T-cell (primary cell): ENCODE measurements at regions of chr11 and their contacts with region 1.

Region 1: DNA sequence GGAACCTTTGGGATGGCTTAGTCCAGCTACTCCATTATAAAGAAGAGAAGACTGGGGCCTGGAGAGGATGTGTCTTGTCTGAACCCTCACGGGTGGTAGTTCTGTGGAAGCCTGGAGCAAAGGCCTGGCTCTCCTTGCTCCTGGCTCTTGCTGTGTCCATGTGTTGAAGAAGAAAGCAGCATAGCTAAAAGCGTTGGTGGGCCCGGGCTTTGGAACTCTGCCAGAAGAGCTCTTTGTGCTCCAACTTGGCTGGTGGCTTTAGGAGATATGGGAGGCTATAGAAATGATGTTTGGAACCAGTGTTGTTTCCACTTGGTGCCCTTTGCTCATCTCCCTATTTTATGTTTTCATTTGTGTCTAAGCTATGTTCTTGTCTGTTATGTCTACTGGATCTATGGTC is 131.1 kb downstream of the DBX1 start:
- DNase-seq: no peak
- ATAC-seq: no peak
- H3K4me3 ChIP-seq: no peak overlapping the region
- H3K4me3 Mint-ChIP-seq: no peak overlapping the region
- H3K27ac ChIP-seq: no peak overlapping the region
- H3K27ac Mint-ChIP-seq: no peak overlapping the region
- H3K4me1 ChIP-seq: no peaks in the 10 kb centered on the region
- H3K4me1 Mint-ChIP-seq: no peaks in the 10 kb centered on the region
- H3K27me3 ChIP-seq: peaks cover 0 to under 1% of the 10 kb centered on the region in 2 experiments
- H3K27me3 Mint-ChIP-seq: peaks cover 0 to 7% of the 10 kb centered on the region in 2 donors

Region 2: DNA sequence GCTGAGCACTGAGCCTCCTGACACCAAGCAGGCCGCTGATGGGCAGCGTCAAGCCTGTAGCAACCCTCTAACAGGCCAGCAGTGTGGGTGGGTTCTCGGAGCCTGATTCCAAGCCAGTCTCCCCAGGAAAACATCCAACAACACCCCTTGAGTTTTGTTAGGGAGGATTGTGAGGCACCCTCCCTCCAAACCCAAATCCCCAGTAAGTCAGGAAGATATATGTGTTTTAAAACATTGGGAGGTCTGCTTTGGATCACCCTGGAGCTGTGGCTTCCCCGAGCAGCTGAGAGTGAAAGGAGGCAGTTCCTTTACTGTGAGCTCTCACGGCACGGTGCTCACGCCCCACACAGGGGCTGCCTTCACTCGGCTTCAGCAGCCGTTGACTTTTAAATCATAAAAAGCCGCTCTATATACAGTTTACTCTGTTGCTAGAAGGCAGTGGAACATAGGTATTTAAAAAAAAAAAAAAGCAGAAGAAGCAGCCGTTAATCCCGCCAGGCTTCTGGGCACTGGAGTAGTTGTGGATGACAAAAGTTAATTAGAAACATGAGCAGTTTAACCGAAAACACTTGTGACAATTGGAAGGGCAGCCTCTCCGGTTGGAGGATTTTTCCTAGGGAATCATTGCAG is 97.9 kb before region 1 on chr11:
- CTCF ChIA-PET with region 1: no interaction called
- POLR2A ChIA-PET with region 1: no interaction called
- DNase-seq: no peak
- ATAC-seq: no peak
- H3K4me3 ChIP-seq: no peak overlapping the region
- H3K4me3 Mint-ChIP-seq: no peak overlapping the region
- H3K27ac ChIP-seq: no peak overlapping the region
- H3K27ac Mint-ChIP-seq: no peak overlapping the region
- H3K4me1 ChIP-seq: no peaks in the 10 kb centered on the region
- H3K4me1 Mint-ChIP-seq: no peaks in the 10 kb centered on the region
- H3K27me3 ChIP-seq: peaks cover 0 to 8% of the 10 kb centered on the region in 2 experiments
- H3K27me3 Mint-ChIP-seq: peaks cover 4% of the 10 kb centered on the region in 2 donors

Region 3: DNA sequence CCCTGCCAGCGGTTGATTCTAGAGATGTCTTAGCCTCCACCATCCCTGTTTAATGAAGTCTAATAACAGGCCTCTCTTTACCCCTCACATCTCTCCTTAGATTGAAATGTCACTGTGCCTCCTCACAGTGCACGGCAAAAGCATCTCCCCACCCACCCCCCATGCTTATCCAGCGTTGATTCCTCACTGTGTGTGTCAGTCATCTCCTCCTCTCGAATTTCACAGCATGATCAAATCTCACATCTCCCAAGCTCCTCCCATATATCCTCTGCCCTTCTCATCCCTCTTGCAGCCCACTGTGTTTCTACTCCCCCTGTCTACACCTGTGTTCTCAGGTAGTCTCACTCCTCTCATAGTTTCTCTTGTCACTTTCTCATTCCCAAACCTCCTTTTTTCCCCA is 46.4 kb after region 1 on chr11:
- CTCF ChIA-PET with region 1: no interaction called
- POLR2A ChIA-PET with region 1: interaction called in 1 of 2 experiments, 11 read pairs
- DNase-seq: no peak
- ATAC-seq: no peak
- H3K4me3 ChIP-seq: no peak overlapping the region
- H3K4me3 Mint-ChIP-seq: no peak overlapping the region
- H3K27ac ChIP-seq: no peak overlapping the region
- H3K27ac Mint-ChIP-seq: no peak overlapping the region
- H3K4me1 ChIP-seq: no peaks in the 10 kb centered on the region
- H3K4me1 Mint-ChIP-seq: peaks cover 0 to 2% (median 0%) of the 10 kb centered on the region in 3 donors
- H3K27me3 ChIP-seq: no peaks in the 10 kb centered on the region
- H3K27me3 Mint-ChIP-seq: peaks cover 9% of the 10 kb centered on the region in 2 donors